Vagina (tissue), 2 donors: ENCODE measurements at regions of chr1 and their contacts with region 1.

Region 1: GRCh38 chr1:51627678-51628077 is 10.8 kb downstream of the OSBPL9 start:
- DNase-seq: no peak
- H3K4me3 ChIP-seq: no peak overlapping the region
- H3K27ac ChIP-seq: no peak overlapping the region
- H3K4me1 ChIP-seq: peaks cover 71% of the 10 kb centered on the region
- H3K27me3 ChIP-seq: no peaks in the 10 kb centered on the region
- CTCF ChIP-seq: peak in 1 of 3 experiments; percentile 22
- POLR2A ChIP-seq: no peak

Region 2: DNA sequence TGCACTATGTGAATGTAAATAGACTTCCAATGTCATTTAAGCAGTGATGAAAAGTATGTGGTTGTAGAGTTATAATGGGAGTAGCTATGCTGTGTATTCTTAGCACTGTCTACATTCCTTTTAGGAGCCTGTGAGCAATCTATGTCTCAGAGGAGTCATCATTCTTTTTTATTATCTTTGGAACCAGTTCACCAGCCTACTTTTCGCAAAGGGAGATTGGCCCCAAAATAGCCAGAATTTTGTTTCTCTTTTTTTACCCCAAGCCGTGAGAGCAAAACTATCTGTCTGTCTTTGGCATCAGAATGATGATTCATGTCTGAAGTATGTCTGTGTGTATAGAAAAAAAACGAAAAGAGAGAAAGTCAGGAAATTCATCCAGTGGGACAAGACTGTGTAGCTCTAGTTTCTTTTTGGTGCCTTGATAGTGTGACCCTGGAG is 33.4 kb after region 1 on chr1:
- intact Hi-C with region 1: loop called (anchors 2 kb)
- DNase-seq: no peak
- H3K4me3 ChIP-seq: no peak overlapping the region
- H3K27ac ChIP-seq: peak overlapping the region; percentile 75
- H3K4me1 ChIP-seq: peaks cover 46% of the 10 kb centered on the region
- H3K27me3 ChIP-seq: no peaks in the 10 kb centered on the region
- CTCF ChIP-seq: no peak
- POLR2A ChIP-seq: no peak

Region 3: GRCh38 chr1:51768971-51769588 is 141.4 kb after region 1 on chr1:
- intact Hi-C with region 1: loop called (anchors 10 kb)
- DNase-seq: no peak
- H3K4me3 ChIP-seq: no peak overlapping the region
- H3K27ac ChIP-seq: peak overlapping the region; percentile 43
- H3K4me1 ChIP-seq: peaks cover 12% of the 10 kb centered on the region
- H3K27me3 ChIP-seq: no peaks in the 10 kb centered on the region
- CTCF ChIP-seq: peak in 2 of 3 experiments; percentile 57 to 80
- POLR2A ChIP-seq: no peak

Region 4: DNA sequence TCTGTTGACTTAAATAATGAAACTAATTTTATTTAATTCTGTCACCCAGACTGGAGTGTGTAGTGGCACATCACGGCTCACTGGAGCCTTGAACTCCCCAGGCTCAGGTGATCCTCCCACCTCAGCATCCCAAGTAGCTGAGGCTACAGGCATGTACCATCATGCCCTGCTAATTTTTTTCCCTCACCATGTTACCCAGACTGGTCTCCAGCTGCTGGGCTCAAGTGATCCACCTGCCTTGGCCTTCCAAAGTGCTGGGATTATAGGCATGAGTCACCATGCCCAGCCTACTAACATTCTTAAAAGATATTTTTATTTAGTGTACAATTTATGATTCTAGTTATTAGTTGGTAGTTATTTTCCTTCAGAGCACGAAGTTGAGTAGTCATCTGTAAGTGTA is 201.4 kb after region 1 on chr1:
- intact Hi-C with region 1: no loop called
- DNase-seq: no peak
- H3K4me3 ChIP-seq: no peak overlapping the region
- H3K27ac ChIP-seq: no peak overlapping the region
- H3K4me1 ChIP-seq: no peaks in the 10 kb centered on the region
- H3K27me3 ChIP-seq: no peaks in the 10 kb centered on the region
- CTCF ChIP-seq: no peak
- POLR2A ChIP-seq: no peak

Region 5: GRCh38 chr1:52179085-52179484 is 551.4 kb after region 1 on chr1:
- intact Hi-C with region 1: no loop called
- DNase-seq: no peak
- H3K4me3 ChIP-seq: no peak overlapping the region
- H3K27ac ChIP-seq: no peak overlapping the region
- H3K4me1 ChIP-seq: no peaks in the 10 kb centered on the region
- H3K27me3 ChIP-seq: no peaks in the 10 kb centered on the region
- CTCF ChIP-seq: no peak
- POLR2A ChIP-seq: no peak